ENCODE measurements at regions of chr9 and their contacts with region 1.

Region 1: DNA sequence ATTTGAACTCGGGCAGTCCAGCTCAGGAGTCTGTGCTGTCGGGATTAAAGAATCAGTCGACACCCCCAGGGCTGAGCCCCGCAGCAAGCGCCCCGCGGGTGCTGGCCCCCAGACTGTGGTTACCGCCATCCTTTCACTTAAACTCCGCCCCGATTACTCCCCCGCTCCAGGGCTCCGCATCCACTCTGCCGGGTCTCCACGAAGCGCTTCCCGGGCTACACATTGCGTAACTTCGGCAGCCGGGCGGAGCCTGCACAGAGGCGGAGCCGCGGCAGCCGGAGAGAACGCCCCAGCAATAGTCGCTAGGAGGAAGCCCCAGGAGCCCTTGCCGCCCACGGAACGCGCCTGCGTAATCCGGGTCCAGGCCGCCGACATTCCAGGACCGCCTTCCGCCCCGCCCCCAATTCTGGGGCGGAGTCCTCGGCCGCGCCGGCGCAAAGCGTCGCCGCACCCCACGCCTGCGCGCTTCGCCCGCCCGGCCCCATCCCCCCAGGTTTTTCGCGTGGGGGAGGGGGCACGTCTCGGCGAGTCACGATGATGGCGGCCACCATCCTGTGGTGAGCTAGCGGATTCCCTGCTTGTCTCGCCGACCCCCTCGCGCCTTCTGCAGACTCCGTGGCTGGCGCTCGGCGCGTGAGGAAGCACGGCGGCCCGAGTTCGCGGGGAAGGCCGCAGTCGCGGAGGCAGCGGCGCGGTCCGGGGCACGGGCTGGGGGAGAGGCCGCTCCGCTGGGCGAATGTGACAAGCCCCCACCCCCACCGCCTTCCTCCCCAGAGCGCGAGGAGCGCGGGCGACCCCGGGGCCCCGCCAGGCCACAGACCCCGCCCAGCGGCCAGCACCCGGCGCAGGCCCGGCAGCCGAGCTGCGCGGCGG is at the start of gene RAD23B:
- DNase-seq: peak; percentile 96 to 100 (median 99)
- H3K4me3 ChIP-seq: peak within 1 kb of the TSS; percentile 85 to 89
- H3K4me3 Mint-ChIP-seq: peak within 1 kb of the TSS; percentile 94 to 100 (median 98)
- H3K27ac ChIP-seq: peak within 1 kb of the TSS; percentile 91
- H3K27ac Mint-ChIP-seq: peak within 1 kb of the TSS; percentile 92 to 98 (median 95)
- H3K4me1 ChIP-seq: peaks cover 44% of the 10 kb centered on the region
- H3K4me1 Mint-ChIP-seq: peaks cover 25 to 55% (median 36%) of the 10 kb centered on the region in 4 donors
- H3K27me3 ChIP-seq: no peaks in the 10 kb centered on the region
- H3K27me3 Mint-ChIP-seq: no peaks in the 10 kb centered on the region
- total RNA-seq, gene RAD23B: 49.5 to 54.2 TPM

Region 2: DNA sequence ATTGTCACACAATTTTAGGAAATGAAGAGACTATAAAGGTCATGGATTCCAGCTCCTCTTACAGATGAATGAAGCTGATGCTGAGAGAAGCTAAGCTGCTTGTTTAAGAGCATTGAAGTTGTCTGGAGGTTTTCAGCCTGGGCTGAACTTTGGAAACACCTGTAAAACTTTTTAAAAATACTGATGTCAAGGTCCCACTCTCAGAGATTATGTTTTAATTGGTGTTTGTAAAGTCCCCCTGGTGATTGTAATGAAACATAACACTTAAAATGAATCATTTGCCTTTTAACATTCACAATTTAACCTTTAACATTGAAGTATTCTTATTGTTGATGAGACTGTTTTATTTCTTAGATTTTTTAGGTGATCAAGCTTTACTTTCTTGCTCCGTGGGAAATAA is 16.4 kb after region 1 on chr9:
- CTCF ChIA-PET with region 1: interaction called, 6 read pairs
- POLR2A ChIA-PET with region 1: interaction called, 11 read pairs
- intact Hi-C with region 1: loop called (anchors 2 kb)
- DNase-seq: peak in 2 of 5 donors; percentile 22 to 24
- H3K4me3 ChIP-seq: no peak overlapping the region
- H3K4me3 Mint-ChIP-seq: peak overlapping the region in 2 of 8 donors; percentile 41 to 43
- H3K27ac ChIP-seq: no peak overlapping the region
- H3K27ac Mint-ChIP-seq: peak overlapping the region in 2 of 7 donors; percentile 23 to 49
- H3K4me1 ChIP-seq: peaks cover 28% of the 10 kb centered on the region
- H3K4me1 Mint-ChIP-seq: peaks cover 32 to 49% (median 35%) of the 10 kb centered on the region in 4 donors
- H3K27me3 ChIP-seq: no peaks in the 10 kb centered on the region
- H3K27me3 Mint-ChIP-seq: no peaks in the 10 kb centered on the region

Region 3: DNA sequence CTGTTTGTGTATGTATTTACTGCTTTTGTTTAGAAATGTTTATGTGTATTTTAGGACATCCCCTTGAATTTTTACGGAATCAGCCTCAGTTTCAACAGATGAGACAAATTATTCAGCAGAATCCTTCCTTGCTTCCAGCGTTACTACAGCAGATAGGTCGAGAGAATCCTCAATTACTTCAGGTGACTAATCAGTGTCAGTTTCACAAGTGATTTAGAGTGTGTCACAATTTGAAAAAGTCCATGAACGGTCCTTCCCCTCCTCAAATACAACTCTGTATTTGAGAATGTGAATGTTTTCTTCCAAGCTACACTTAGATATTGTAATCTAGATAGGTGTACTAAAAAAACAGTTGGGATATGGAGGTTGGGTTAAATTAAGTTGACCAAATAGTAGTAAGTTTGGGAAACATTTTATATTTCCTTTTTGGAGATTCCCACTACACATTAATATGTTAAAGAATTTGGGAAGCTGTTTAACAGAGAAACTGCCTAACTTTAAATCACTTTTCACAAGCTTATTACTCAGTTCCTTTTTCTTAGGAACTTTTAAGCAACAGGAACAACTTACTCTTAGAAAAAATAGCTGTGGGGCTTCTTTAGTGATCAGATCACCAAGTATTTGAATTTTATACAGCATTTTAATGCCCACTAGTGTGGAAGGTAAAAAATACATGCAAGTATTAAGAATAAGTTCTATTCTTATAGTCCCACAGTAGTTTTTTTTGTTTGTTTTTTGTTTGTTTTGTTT is 41.0 kb after region 1 on chr9:
- CTCF ChIA-PET with region 1: interaction called, 3 read pairs
- POLR2A ChIA-PET with region 1: no interaction called
- intact Hi-C with region 1: loop called (anchors 5 kb)
- DNase-seq: no peak
- H3K4me3 ChIP-seq: no peak overlapping the region
- H3K4me3 Mint-ChIP-seq: no peak overlapping the region
- H3K27ac ChIP-seq: no peak overlapping the region
- H3K27ac Mint-ChIP-seq: peak overlapping the region in 2 of 7 donors; percentile 9 to 67
- H3K4me1 ChIP-seq: no peaks in the 10 kb centered on the region
- H3K4me1 Mint-ChIP-seq: peaks cover 5 to 14% (median 10%) of the 10 kb centered on the region in 4 donors
- H3K27me3 ChIP-seq: no peaks in the 10 kb centered on the region
- H3K27me3 Mint-ChIP-seq: no peaks in the 10 kb centered on the region

Region 4: DNA sequence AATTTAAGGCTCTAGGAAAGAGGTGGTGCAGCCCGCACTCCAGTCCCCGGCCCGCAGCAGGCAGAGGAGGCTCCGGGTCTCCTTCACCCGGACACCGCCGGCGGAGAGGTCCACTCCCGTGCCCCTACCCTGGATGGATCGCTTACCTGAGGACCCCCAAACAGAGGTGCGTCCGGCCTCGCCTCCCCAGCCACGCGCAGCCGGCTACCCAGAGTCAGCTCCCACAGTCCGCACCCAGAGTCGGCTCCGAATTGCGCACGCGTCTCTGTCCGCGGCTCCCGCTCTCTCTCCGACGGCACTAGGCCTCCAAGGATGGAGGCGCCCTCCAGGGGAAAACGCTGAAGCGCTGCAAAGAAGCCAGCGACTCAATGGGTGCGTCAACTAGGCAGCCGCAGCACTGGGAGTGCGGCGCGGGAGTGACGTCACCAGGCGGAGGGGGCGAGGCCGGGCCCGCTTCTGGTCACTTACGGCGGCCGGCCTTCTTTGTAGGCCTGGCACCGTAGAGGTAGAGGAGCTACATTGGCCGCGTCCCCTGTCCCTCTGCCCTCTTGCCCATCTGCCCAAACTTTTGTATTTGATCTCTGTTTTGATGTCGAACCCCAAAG is 1650.8 kb after region 1 on chr9 and contains the start of gene ELP1:
- CTCF ChIA-PET with region 1: no interaction called
- POLR2A ChIA-PET with region 1: no interaction called
- intact Hi-C with region 1: loop called (anchors 1 kb)
- DNase-seq: peak; percentile 91 to 95 (median 93)
- H3K4me3 ChIP-seq: peak within 1 kb of the TSS; percentile 78 to 100
- H3K4me3 Mint-ChIP-seq: peak within 1 kb of the TSS; percentile 99 to 100 (median 99)
- H3K27ac ChIP-seq: peak within 1 kb of the TSS; percentile 83
- H3K27ac Mint-ChIP-seq: peak within 1 kb of the TSS; percentile 91 to 99 (median 99)
- H3K4me1 ChIP-seq: peaks cover 26% of the 10 kb centered on the region
- H3K4me1 Mint-ChIP-seq: peaks cover 28 to 47% (median 38%) of the 10 kb centered on the region in 4 donors
- H3K27me3 ChIP-seq: no peaks in the 10 kb centered on the region
- H3K27me3 Mint-ChIP-seq: no peaks in the 10 kb centered on the region
- total RNA-seq, gene ELP1: 29.4 to 32.3 TPM

Region 5: DNA sequence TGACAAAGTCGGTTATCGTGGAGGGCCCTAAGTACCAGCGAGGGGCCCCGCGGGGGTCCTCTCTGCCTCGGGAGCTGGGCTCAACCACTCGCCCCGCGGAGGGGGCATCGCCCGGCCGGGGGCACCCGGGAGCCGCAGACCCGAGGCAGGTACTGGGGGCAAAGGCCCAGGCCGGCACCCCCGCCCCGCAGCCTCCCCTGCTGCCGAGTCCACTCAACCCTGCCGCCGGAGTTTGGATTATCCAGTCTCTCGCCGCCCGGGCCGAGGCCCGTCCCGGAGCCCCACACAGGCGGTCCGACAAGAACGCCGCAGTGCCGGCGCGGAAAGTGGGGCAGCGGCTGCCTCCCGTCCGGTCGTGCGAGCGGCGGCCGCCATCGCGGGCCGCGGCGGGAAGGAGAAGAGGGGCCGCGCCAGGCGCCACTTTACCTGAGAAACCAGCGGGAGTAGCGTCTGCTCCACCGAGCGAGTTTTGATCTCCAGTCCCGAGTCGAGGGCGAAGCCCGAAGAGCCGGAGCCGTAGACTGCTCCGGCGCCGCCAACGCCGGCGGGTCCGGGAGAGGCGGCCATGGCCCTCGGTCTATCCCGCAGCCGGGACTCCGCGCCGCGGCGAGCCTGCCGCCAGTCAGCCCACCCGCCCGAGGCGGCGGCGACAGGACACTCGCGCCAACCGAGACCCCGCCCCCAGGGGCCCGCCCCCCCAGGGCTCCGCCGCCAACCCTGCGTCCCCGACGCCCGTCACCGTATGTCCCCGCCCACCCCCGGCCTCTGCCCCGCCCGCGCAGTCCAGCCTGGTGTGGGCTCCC is 1730.1 kb after region 1 on chr9 and contains the start of gene CTNNAL1:
- CTCF ChIA-PET with region 1: no interaction called
- POLR2A ChIA-PET with region 1: no interaction called
- intact Hi-C with region 1: loop called (anchors 5 kb)
- DNase-seq: peak; percentile 82 to 91 (median 83)
- H3K4me3 ChIP-seq: peak within 1 kb of the TSS; percentile 66
- H3K4me3 Mint-ChIP-seq: peak within 1 kb of the TSS; percentile 93 to 100 (median 96)
- H3K27ac ChIP-seq: peak within 1 kb of the TSS; percentile 61
- H3K27ac Mint-ChIP-seq: peak within 1 kb of the TSS; percentile 93 to 99 (median 95)
- H3K4me1 ChIP-seq: peaks cover 13% of the 10 kb centered on the region
- H3K4me1 Mint-ChIP-seq: peaks cover 17 to 31% (median 28%) of the 10 kb centered on the region in 4 donors
- H3K27me3 ChIP-seq: no peaks in the 10 kb centered on the region
- H3K27me3 Mint-ChIP-seq: no peaks in the 10 kb centered on the region
- total RNA-seq, gene CTNNAL1: 2.6 to 3.3 TPM